Activated T-helper 2 cell treated with anti-CD3 and anti-CD28 coated beads, Interferon-gamma antibody, Interleukin-2, Interleukin-4, amounts not matched to agents 10 μg/mL and 5 μg/mL and 100 μg/mL, durations not matched to agents 14 hours and 24 hours and 36 hours (primary cell): ENCODE measurements at regions of chr7 and their contacts with region 1.

Region 1: GRCh38 chr7:940599-941408 is 13.7 kb downstream of the ADAP1 start:
- DNase-seq: no peak
- H3K4me3 Mint-ChIP-seq: peak overlapping the region; percentile 52
- H3K27ac Mint-ChIP-seq: peak overlapping the region; percentile 93
- H3K4me1 Mint-ChIP-seq: peaks cover 30% of the 10 kb centered on the region
- H3K27me3 Mint-ChIP-seq: peaks cover 2% of the 10 kb centered on the region

Region 2: GRCh38 chr7:923108-924041 is 17.4 kb before region 1 on chr7:
- intact Hi-C with region 1: loop called (anchors 1 kb)
- DNase-seq: peak; percentile 92
- H3K4me3 Mint-ChIP-seq: peak overlapping the region; percentile 79
- H3K27ac Mint-ChIP-seq: peak overlapping the region; percentile 94
- H3K4me1 Mint-ChIP-seq: peaks cover 23% of the 10 kb centered on the region
- H3K27me3 Mint-ChIP-seq: no peaks in the 10 kb centered on the region